Posterior vena cava (tissue), 2 donors: ENCODE measurements at regions of chr1 and their contacts with region 1.

Region 1: GRCh38 chr1:39003794-39004193 is 12.7 kb downstream of the AKIRIN1 start:
- DNase-seq: no peak

Region 2: GRCh38 chr1:38250356-38250755 is 753.4 kb before region 1 on chr1:
- intact Hi-C with region 1: loop called in 1 of 2 experiments (anchors 5 kb)
- DNase-seq: no peak